PC-9 (cell line): ENCODE measurements at regions of chr7 and their contacts with region 1.

Region 1: DNA sequence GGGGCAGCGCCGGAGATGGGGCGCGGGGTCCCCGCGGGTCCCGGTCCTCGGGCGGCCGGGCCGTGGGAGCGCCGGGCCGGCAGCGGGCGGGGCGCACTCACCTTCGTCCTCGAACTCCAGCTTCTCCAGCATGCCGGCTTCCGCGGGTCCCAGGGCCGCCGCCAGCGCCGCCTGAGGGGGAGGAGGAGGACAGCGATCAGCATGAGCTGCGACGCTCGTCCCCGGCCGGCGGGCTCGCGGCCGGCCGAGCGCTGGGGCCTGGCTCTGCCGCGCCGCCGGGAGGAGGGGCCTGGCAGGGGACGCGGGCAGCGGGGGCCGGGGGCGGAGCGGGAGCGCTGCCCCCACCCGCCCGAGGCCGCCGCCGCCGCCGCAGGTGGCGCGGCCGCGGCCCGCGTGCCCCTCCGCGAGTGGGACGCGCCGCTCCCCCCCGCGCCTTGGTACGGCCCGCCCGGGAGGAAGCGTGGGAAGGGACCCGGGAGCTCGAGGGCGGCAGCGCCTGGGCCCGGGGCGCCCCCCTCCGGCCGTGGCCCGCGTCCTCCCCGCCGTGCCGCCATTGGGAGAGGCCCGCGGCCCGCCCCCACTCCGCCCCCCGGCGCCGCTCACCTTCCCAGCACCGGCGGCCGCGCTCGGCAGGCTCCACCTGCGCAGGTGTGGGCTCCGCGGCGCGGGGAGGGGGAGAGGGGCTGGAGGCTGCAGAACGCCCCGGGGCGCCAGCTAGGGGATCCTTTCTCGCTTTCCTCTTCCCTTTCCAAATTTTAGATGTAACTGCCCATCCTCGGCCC is 112.5 kb upstream of the RHEB start:
- DNase-seq: peak; percentile 68 to 97
- H3K4me3 ChIP-seq: peak overlapping the region; percentile 73
- H3K27ac ChIP-seq: peak overlapping the region; percentile 75
- H3K4me1 ChIP-seq: peaks cover 24% of the 10 kb centered on the region
- H3K27me3 ChIP-seq: no peaks in the 10 kb centered on the region
- CTCF ChIP-seq: no peak

Region 2: GRCh38 chr7:151519765-151520418 is 112.3 kb before region 1 on chr7 and contains the start of gene RHEB:
- CTCF ChIA-PET with region 1: no interaction called
- POLR2A ChIA-PET with region 1: no interaction called
- intact Hi-C with region 1: loop called (anchors 1 kb)
- DNase-seq: peak; percentile 98 to 99
- H3K4me3 ChIP-seq: peak within 1 kb of the TSS; percentile 87
- H3K27ac ChIP-seq: peak within 1 kb of the TSS; percentile 94
- H3K4me1 ChIP-seq: peaks cover 37% of the 10 kb centered on the region
- H3K27me3 ChIP-seq: no peaks in the 10 kb centered on the region
- CTCF ChIP-seq: no peak
- total RNA-seq, gene RHEB: 201 and 202 TPM in 2 replicates

Region 3: GRCh38 chr7:151648429-151648828 is 16.3 kb after region 1 on chr7:
- CTCF ChIA-PET with region 1: interaction called, 5 read pairs
- POLR2A ChIA-PET with region 1: interaction called, 10 read pairs
- intact Hi-C with region 1: no loop called
- DNase-seq: no peak
- H3K4me3 ChIP-seq: no peak overlapping the region
- H3K27ac ChIP-seq: no peak overlapping the region
- H3K4me1 ChIP-seq: peaks cover 19% of the 10 kb centered on the region
- H3K27me3 ChIP-seq: no peaks in the 10 kb centered on the region
- CTCF ChIP-seq: no peak

Region 4: DNA sequence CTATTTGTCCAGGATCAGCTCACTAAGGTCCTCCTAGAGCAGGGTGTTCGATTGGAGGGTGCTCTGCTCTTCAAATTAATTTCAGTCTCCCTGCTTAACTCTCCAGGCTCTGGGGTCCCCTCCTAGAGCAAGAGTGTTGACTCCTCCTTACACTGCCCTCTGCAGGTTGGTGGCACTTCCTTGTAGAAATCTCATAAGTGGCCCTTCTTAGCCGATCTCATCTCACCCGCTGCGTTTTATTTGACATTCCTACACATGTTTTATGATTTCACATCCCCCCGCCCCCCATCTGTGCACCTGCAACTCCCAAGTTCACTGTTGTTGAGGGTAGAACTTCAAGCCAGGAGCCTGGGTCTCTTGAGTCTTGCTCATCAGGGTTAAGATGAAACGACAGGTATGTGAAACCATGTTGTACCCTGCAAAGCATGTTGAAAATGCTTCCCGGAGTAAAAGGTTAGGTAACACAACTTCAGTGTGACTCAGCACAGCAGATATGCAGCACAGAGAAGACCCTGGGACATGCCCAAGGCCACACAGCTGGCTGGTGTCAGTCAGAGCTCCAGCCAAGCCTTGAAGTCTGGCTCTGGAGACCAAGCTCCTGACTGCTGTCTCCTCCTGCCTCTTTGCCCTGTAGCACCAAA is 73.6 kb after region 1 on chr7:
- CTCF ChIA-PET with region 1: interaction called, 3 read pairs
- POLR2A ChIA-PET with region 1: no interaction called
- intact Hi-C with region 1: loop called (anchors 2 kb)
- DNase-seq: peak in 1 of 2 experiments; percentile 70
- H3K4me3 ChIP-seq: no peak overlapping the region
- H3K27ac ChIP-seq: no peak overlapping the region
- H3K4me1 ChIP-seq: peaks cover 21% of the 10 kb centered on the region
- H3K27me3 ChIP-seq: no peaks in the 10 kb centered on the region
- CTCF ChIP-seq: peak; percentile 74

Region 5: DNA sequence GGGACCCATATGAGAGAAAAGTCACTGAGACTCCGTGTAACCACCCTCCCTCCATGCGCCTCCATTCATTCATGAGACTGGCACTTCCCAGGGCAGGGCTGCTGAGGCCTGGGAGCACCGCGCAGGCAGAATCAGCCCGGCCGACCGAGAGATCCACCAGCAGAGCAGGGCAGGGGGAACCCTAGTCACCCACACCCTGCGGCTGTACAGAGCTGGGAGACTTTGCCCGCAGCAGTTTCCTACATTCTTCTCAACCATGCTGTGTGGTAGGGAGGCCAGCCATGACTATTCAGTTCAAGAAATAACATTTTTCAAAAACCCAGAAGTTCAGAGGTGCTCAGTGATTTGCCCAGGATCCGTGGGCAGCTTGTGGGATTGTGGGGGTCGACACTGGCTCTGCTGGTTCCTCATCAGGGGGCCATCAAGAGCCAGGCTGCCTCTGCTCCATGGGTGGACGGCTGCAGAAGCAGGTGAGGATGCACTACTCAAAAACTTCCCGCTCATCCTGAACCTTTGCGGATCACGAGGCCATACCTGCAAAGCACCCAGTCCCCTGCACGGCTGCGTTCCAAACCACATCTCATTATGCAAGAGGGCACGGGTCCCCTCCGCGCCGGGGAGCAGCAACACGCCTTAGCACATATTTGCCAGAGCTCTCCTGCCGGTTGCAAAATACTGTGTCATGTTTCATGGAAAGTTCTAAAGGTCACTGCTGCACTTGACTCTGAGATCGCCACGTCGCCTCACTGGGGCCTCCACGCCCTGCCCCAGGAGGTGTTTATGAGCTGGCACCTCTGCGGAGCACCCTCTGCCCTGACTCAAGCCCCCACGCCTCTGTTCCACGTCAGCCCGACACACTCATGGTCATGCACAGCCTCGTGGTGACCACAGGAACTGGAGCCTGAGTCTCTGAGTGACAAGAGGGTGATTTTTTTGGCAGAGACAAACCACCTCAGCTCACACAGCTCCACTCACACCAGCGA is 112.8 kb after region 1 on chr7:
- CTCF ChIA-PET with region 1: interaction called, 10 read pairs
- POLR2A ChIA-PET with region 1: no interaction called
- intact Hi-C with region 1: loop called (anchors 1 kb)
- DNase-seq: peak; percentile 96 to 100
- H3K4me3 ChIP-seq: no peak overlapping the region; the same call in 1 of the 2 replicates
- H3K27ac ChIP-seq: peak overlapping the region; percentile 81
- H3K4me1 ChIP-seq: peaks cover 44% of the 10 kb centered on the region
- H3K27me3 ChIP-seq: no peaks in the 10 kb centered on the region
- CTCF ChIP-seq: peak; percentile 70